ENCODE measurements at regions of chr10 and their contacts with region 1.

Region 1: GRCh38 chr10:7872041-7872442 is 53.7 kb downstream of the TAF3 start:
- DNase-seq: peak; percentile 27
- H3K4me3 ChIP-seq: peak overlapping the region; percentile 47 to 78 (median 47)
- H3K27ac ChIP-seq: no peak overlapping the region
- H3K4me1 ChIP-seq: no peaks in the 10 kb centered on the region
- H3K27me3 ChIP-seq: no peaks in the 10 kb centered on the region
- CTCF ChIP-seq: peak; percentile 51 to 69

Region 2: GRCh38 chr10:8331883-8332729 is 460.1 kb after region 1 on chr10:
- CTCF ChIA-PET with region 1: no interaction called
- dilution Hi-C with region 1: no loop called
- in situ Hi-C with region 1: no loop called
- intact Hi-C with region 1: loop called (anchors 10 kb)
- DNase-seq: peak; percentile 86
- H3K4me3 ChIP-seq: peak overlapping the region; percentile 24 to 47 (median 38)
- H3K27ac ChIP-seq: no peak overlapping the region
- H3K4me1 ChIP-seq: peaks cover 9% of the 10 kb centered on the region
- H3K27me3 ChIP-seq: peaks cover 2% of the 10 kb centered on the region
- CTCF ChIP-seq: no peak

Region 3: GRCh38 chr10:8473205-8473604 is 601.2 kb after region 1 on chr10:
- CTCF ChIA-PET with region 1: no interaction called
- dilution Hi-C with region 1: no loop called
- in situ Hi-C with region 1: no loop called
- intact Hi-C with region 1: loop called (anchors 10 kb)
- DNase-seq: no peak
- H3K4me3 ChIP-seq: no peak overlapping the region
- H3K27ac ChIP-seq: no peak overlapping the region
- H3K4me1 ChIP-seq: no peaks in the 10 kb centered on the region
- H3K27me3 ChIP-seq: no peaks in the 10 kb centered on the region
- CTCF ChIP-seq: peak in 1 of 2 donors; percentile 19

Region 4: GRCh38 chr10:8898745-8899325 is 1026.8 kb after region 1 on chr10:
- CTCF ChIA-PET with region 1: interaction called, 6 read pairs
- dilution Hi-C with region 1: no loop called
- in situ Hi-C with region 1: loop called in 1 of 2 experiments (anchors 25 kb)
- intact Hi-C with region 1: no loop called
- DNase-seq: no peak
- H3K4me3 ChIP-seq: no peak overlapping the region
- H3K27ac ChIP-seq: no peak overlapping the region
- H3K4me1 ChIP-seq: no peaks in the 10 kb centered on the region
- H3K27me3 ChIP-seq: no peaks in the 10 kb centered on the region
- CTCF ChIP-seq: no peak

Region 5: DNA sequence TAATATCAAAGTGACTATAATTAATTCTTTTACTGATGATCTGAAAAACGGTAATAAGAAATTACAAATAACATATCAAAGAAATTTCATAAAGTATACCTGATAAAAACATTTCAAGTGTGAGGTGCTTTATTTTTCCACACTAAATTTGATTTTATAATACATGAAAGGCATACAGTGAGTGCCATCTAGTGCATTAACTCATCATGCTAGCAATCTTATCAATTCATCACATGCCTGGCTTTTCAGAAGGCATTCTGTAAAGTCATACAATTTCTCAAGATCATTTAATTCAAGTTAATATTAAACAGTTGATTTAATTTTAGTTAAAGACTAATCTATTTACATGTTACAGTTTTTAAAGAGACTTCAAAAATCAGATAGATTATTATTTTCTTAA is 1203.4 kb after region 1 on chr10:
- CTCF ChIA-PET with region 1: no interaction called
- dilution Hi-C with region 1: no loop called
- in situ Hi-C with region 1: no loop called
- intact Hi-C with region 1: loop called (anchors 5 kb)
- DNase-seq: no peak
- H3K4me3 ChIP-seq: no peak overlapping the region
- H3K27ac ChIP-seq: no peak overlapping the region
- H3K4me1 ChIP-seq: no peaks in the 10 kb centered on the region
- H3K27me3 ChIP-seq: no peaks in the 10 kb centered on the region
- CTCF ChIP-seq: peak; percentile 15 to 46

Region 6: GRCh38 chr10:9209105-9209798 is 1337.2 kb after region 1 on chr10:
- CTCF ChIA-PET with region 1: interaction called, 3 read pairs
- dilution Hi-C with region 1: no loop called
- in situ Hi-C with region 1: loop called (anchors 10 to 25 kb)
- intact Hi-C with region 1: loop called (anchors 1 kb)
- DNase-seq: peak; percentile 46
- H3K4me3 ChIP-seq: no peak overlapping the region
- H3K27ac ChIP-seq: no peak overlapping the region
- H3K4me1 ChIP-seq: no peaks in the 10 kb centered on the region
- H3K27me3 ChIP-seq: no peaks in the 10 kb centered on the region
- CTCF ChIP-seq: peak; percentile 90